CD4-positive, alpha-beta memory T cell (primary cell): ENCODE measurements at regions of chr1 and their contacts with region 1.

Region 1: GRCh38 chr1:16206547-16207317 is 5.7 kb downstream of the ARHGEF19 start:
- DNase-seq: peak; percentile 93 to 97 (median 94)
- H3K4me3 ChIP-seq: peak overlapping the region; percentile 52 to 61
- H3K4me3 Mint-ChIP-seq: peak overlapping the region; percentile 89 to 97 (median 90)
- H3K27ac ChIP-seq: peak overlapping the region; percentile 76
- H3K27ac Mint-ChIP-seq: peak overlapping the region; percentile 94 to 98 (median 97)
- H3K4me1 ChIP-seq: peaks cover 20% of the 10 kb centered on the region
- H3K4me1 Mint-ChIP-seq: peaks cover 1 to 36% (median 16%) of the 10 kb centered on the region in 4 donors
- H3K27me3 ChIP-seq: no peaks in the 10 kb centered on the region
- H3K27me3 Mint-ChIP-seq: no peaks in the 10 kb centered on the region

Region 2: DNA sequence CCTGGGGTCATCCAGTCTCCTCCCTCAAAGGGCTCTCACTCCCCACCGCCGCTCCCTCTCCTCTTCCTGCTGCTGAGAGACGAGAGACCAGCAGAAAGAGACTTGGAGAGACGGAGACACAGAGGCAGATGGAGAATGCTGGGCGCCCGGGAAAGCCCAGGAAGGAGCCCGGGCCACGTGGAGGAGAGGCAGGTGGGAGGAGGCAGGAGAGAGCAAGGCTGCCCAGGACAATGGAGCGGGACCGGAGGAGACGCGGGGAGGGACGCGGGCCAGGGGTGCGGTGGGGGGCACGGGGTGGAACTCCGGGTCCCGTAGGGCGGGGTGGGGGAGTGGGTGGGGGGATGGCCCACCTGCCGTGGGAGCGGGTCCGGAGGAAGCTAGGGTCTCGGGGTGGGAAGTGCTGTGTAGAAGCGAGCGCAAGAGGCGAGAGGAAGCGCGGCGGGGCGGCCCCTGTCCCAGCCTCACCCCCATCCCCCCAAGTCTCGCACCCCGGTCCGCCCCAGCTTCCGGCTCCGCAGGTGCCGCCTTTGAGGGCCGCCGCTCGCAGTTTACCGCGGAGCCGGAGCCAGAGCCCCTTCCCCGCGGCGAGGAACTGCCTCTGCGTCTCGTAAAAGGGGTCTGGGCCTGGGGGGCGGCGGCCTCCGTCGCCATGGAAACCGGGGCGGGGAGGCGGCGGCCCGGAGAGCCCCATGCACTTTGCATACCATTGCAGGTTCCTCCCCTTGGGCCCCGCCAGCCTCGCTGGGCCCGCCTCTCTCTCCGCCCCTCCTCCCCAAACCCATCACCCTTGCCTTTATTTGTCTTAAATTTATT is 39.2 kb before region 1 on chr1:
- CTCF ChIA-PET with region 1: no interaction called
- POLR2A ChIA-PET with region 1: interaction called, 3 read pairs
- intact Hi-C with region 1: loop called (anchors 2 kb)
- DNase-seq: peak; percentile 64 to 74 (median 70)
- H3K4me3 ChIP-seq: no peak overlapping the region
- H3K4me3 Mint-ChIP-seq: peak overlapping the region in 7 of 8 donors; percentile 17 to 84 (median 72)
- H3K27ac ChIP-seq: peak overlapping the region; percentile 9
- H3K27ac Mint-ChIP-seq: peak overlapping the region in 3 of 7 donors; percentile 23 to 48 (median 40)
- H3K4me1 ChIP-seq: peaks cover 35% of the 10 kb centered on the region
- H3K4me1 Mint-ChIP-seq: peaks cover 29 to 71% (median 47%) of the 10 kb centered on the region in 4 donors
- H3K27me3 ChIP-seq: no peaks in the 10 kb centered on the region
- H3K27me3 Mint-ChIP-seq: peaks cover 0 to 2% of the 10 kb centered on the region in 2 donors

Region 3: DNA sequence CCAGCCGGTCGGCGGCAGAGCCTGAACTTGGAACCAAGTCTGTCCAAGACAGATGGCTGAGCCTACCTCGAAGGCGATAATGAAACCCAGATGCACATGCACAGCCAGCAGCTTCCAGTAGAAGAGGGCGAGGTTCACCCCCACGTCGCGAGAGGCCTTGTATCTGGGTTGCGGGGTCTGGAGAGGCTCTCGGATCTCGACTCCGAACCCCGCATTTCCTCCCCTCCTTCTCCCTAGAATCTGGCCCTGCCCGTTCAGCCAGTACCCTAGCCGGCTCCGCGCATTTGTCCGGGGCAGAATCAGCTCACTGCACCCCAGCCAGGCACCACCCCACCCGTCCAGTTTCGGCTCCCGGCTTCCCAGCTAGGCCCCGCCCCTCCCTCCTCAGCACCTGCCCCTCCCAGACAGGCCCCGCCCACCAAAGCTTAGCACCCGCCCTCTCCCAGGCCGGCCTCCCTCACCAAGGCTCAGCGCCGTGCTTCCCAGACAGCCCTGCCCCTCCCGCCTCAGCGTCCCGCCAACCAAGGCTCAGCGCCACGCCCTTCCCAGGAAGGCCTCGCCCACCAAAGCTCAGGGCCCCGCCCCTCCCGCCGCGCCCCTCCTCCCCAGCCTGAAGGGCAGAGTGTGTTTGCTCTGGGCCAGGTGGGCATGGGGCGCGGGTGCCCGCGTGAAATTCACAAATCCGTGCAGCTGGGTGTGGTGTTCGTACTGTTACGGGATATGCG is 10.5 kb after region 1 on chr1:
- CTCF ChIA-PET with region 1: interaction called, 7 read pairs
- POLR2A ChIA-PET with region 1: interaction called, 42 read pairs
- intact Hi-C with region 1: loop called (anchors 1 kb)
- DNase-seq: peak; percentile 88 to 94 (median 90)
- H3K4me3 ChIP-seq: peak overlapping the region; percentile 61 to 72
- H3K4me3 Mint-ChIP-seq: peak overlapping the region; percentile 84 to 91 (median 88)
- H3K27ac ChIP-seq: peak overlapping the region; percentile 30
- H3K27ac Mint-ChIP-seq: peak overlapping the region; percentile 68 to 91 (median 86)
- H3K4me1 ChIP-seq: peaks cover 19% of the 10 kb centered on the region
- H3K4me1 Mint-ChIP-seq: peaks cover 5 to 40% (median 16%) of the 10 kb centered on the region in 4 donors
- H3K27me3 ChIP-seq: no peaks in the 10 kb centered on the region
- H3K27me3 Mint-ChIP-seq: peaks cover 0 to 2% of the 10 kb centered on the region in 2 donors

Region 4: GRCh38 chr1:16243936-16244649 is 37.4 kb after region 1 on chr1:
- CTCF ChIA-PET with region 1: interaction called, 31 read pairs
- POLR2A ChIA-PET with region 1: interaction called, 4 read pairs
- intact Hi-C with region 1: loop called (anchors 1 kb)
- DNase-seq: peak; percentile 65 to 73 (median 70)
- H3K4me3 ChIP-seq: no peak overlapping the region
- H3K4me3 Mint-ChIP-seq: no peak overlapping the region
- H3K27ac ChIP-seq: no peak overlapping the region
- H3K27ac Mint-ChIP-seq: peak overlapping the region in 4 of 7 donors; percentile 38 to 59 (median 46)
- H3K4me1 ChIP-seq: peaks cover 11% of the 10 kb centered on the region
- H3K4me1 Mint-ChIP-seq: peaks cover 3 to 6% (median 5%) of the 10 kb centered on the region in 4 donors
- H3K27me3 ChIP-seq: no peaks in the 10 kb centered on the region
- H3K27me3 Mint-ChIP-seq: no peaks in the 10 kb centered on the region